Activated B cell treated with CpG ODN at 0.5 μM for 24 hours (primary cell): ENCODE measurements at regions of chr3 and their contacts with region 1.

Region 1: GRCh38 chr3:18512007-18512406 is 86.9 kb upstream of the SATB1 start:
- DNase-seq: no peak
- ATAC-seq: peak; percentile 84
- H3K4me3 Mint-ChIP-seq: no peak overlapping the region
- H3K27ac Mint-ChIP-seq: no peak overlapping the region
- H3K4me1 Mint-ChIP-seq: peaks cover 34% of the 10 kb centered on the region
- H3K27me3 Mint-ChIP-seq: no peaks in the 10 kb centered on the region
- CTCF ChIP-seq: no peak

Region 2: GRCh38 chr3:18454766-18455165 is 57.2 kb before region 1 on chr3:
- CTCF ChIA-PET with region 1: no interaction called
- POLR2A ChIA-PET with region 1: no interaction called
- intact Hi-C with region 1: no loop called
- DNase-seq: no peak
- ATAC-seq: no peak
- H3K4me3 Mint-ChIP-seq: no peak overlapping the region
- H3K27ac Mint-ChIP-seq: no peak overlapping the region
- H3K4me1 Mint-ChIP-seq: no peaks in the 10 kb centered on the region
- H3K27me3 Mint-ChIP-seq: no peaks in the 10 kb centered on the region
- CTCF ChIP-seq: no peak

Region 3: DNA sequence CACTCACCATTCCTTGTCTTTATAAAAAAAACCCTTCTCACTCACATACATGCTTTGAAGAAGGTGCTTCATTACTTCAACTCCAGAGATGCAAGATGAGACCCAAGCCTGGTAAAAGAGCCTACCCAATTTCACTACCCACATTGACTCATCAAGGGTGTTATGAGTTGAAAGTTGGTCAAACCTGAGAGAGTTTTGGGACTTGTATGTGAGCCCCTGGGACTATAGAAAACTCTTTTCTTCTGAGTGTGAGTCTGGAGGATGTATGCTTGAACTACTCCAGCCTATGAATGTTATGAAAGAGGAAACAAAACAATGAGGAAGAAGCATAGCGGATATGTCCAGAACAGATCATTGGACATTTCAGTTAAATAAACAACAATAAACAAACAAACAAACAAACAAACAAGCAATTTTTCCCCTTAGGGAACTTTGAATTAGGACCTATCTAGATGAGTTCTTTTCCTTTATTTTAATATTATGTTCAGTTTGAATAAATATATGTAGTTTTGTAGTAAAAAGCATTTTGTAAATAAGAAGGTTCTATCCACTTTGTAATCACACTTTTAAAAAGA is 19.7 kb after region 1 on chr3:
- CTCF ChIA-PET with region 1: no interaction called
- POLR2A ChIA-PET with region 1: no interaction called
- intact Hi-C with region 1: loop called (anchors 2 kb)
- DNase-seq: no peak
- ATAC-seq: peak; percentile 97
- H3K4me3 Mint-ChIP-seq: no peak overlapping the region
- H3K27ac Mint-ChIP-seq: peak overlapping the region; percentile 37
- H3K4me1 Mint-ChIP-seq: peaks cover 49% of the 10 kb centered on the region
- H3K27me3 Mint-ChIP-seq: no peaks in the 10 kb centered on the region
- CTCF ChIP-seq: no peak